Naive thymus-derived CD4-positive, alpha-beta T cell (primary cell): ENCODE measurements at regions of chr3 and their contacts with region 1.

Region 1: DNA sequence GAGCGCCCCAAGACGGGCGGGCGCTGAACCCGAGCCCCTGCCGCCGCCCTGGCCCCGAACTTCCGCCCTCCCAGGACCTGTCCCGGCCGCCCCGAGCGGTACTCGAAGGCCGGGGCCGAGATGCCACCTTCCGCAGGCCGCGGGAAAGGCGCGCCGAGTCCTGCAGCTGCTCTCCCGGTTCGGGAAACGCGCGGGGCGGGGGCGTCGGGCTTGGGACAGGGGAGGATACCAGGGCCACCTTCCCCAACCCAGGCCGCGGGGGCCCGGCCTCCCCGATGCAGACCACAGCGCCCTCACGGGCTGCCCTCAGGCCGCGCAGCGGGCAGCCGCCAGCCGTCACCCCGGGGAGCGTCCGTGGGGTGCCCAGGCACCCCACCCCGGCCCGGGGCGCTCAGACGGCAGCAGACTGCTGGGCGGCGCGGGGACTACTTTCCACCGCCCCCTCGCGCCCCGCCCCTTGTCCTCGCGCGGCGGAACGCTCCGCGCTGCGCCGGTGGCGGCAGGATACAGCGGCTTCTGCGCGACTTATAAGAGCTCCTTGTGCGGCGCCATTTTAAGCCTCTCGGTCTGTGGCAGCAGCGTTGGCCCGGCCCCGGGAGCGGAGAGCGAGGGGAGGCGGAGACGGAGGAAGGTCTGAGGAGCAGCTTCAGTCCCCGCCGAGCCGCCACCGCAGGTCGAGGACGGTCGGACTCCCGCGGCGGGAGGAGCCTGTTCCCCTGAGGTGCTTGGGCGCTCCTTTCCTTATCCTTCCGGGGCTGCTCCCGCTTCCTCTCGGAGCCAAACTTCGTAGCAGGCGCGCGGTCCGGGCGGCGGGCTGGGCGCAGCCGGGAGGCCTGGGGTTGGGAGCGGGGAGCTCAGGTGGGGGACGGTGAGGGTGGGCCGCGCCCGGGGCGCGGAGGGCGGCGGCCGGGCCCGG is at the start of gene CTNNB1:
- DNase-seq: peak; percentile 88 to 94 (median 92)
- ATAC-seq: peak; percentile 93
- H3K4me3 ChIP-seq: peak within 1 kb of the TSS; percentile 79
- H3K4me3 Mint-ChIP-seq: peak within 1 kb of the TSS; percentile 90 to 100 (median 95)
- H3K27ac ChIP-seq: peak within 1 kb of the TSS; percentile 97
- H3K27ac Mint-ChIP-seq: peak within 1 kb of the TSS; percentile 92 to 98 (median 96)
- H3K4me1 ChIP-seq: peaks cover 26 to 39% of the 10 kb centered on the region in 2 donors
- H3K4me1 Mint-ChIP-seq: peaks cover 31 to 43% (median 38%) of the 10 kb centered on the region in 7 donors
- H3K27me3 ChIP-seq: peaks cover 0 to 3% of the 10 kb centered on the region in 2 donors
- H3K27me3 Mint-ChIP-seq: peaks cover 0 to 29% (median 0%) of the 10 kb centered on the region in 5 donors
- total RNA-seq, gene CTNNB1: 118 to 227 (median 177) TPM

Region 2: GRCh38 chr3:40309418-40309924 is 889.7 kb before region 1 on chr3 and contains the start of gene EIF1B:
- CTCF ChIA-PET with region 1: no interaction called
- POLR2A ChIA-PET with region 1: interaction called, 4 read pairs
- intact Hi-C with region 1: loop called (anchors 1 kb)
- DNase-seq: peak; percentile 95 to 99 (median 98)
- ATAC-seq: peak; percentile 97
- H3K4me3 ChIP-seq: peak within 1 kb of the TSS; percentile 80
- H3K4me3 Mint-ChIP-seq: peak within 1 kb of the TSS; percentile 92 to 100 (median 99)
- H3K27ac ChIP-seq: peak within 1 kb of the TSS; percentile 99
- H3K27ac Mint-ChIP-seq: peak within 1 kb of the TSS; percentile 97 to 100 (median 99)
- H3K4me1 ChIP-seq: peaks cover 5 to 16% of the 10 kb centered on the region in 2 donors
- H3K4me1 Mint-ChIP-seq: peaks cover 5 to 44% (median 30%) of the 10 kb centered on the region in 7 donors
- H3K27me3 ChIP-seq: no peaks in the 10 kb centered on the region
- H3K27me3 Mint-ChIP-seq: no peaks in the 10 kb centered on the region
- total RNA-seq, gene EIF1B: 34.5 to 82.0 (median 53.3) TPM

Region 3: GRCh38 chr3:40580494-40581091 is 618.6 kb before region 1 on chr3:
- CTCF ChIA-PET with region 1: no interaction called
- POLR2A ChIA-PET with region 1: no interaction called
- intact Hi-C with region 1: loop called in 1 of 2 experiments (anchors 5 kb)
- DNase-seq: peak; percentile 18 to 61 (median 51)
- ATAC-seq: peak; percentile 72
- H3K4me3 ChIP-seq: no peak overlapping the region
- H3K4me3 Mint-ChIP-seq: no peak overlapping the region
- H3K27ac ChIP-seq: no peak overlapping the region
- H3K27ac Mint-ChIP-seq: peak overlapping the region in 1 of 9 donors; percentile 5
- H3K4me1 ChIP-seq: no peaks in the 10 kb centered on the region
- H3K4me1 Mint-ChIP-seq: no peaks in the 10 kb centered on the region
- H3K27me3 ChIP-seq: no peaks in the 10 kb centered on the region
- H3K27me3 Mint-ChIP-seq: peaks cover 0 to 9% (median 4%) of the 10 kb centered on the region in 5 donors

Region 4: DNA sequence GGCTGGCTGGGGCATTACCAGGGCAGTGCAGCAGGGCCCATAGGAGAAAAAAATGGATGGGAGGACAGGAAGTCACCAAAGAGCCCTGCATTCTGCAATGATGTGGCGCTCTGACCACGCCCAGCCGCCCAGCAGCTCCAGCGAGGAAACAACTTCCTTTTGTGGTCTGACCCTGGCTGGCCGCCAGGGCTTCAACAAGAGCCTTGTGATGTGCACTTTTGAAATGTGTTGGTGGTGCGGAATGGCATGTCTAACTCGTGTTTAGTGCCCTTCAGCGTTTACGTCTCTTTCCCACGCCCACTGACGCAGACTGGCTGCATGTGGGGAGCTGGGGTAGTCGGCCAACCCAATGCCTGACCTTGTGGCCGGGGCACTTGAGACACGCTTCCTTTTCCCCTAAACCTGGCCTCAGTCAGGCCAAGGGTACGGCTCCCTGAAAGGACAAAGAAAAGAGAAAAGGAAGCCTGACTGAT is 81.8 kb before region 1 on chr3:
- CTCF ChIA-PET with region 1: no interaction called
- POLR2A ChIA-PET with region 1: interaction called, 42 read pairs
- intact Hi-C with region 1: loop called (anchors 1 kb)
- DNase-seq: peak; percentile 67 to 93 (median 90)
- ATAC-seq: peak; percentile 92
- H3K4me3 ChIP-seq: peak overlapping the region; percentile 25
- H3K4me3 Mint-ChIP-seq: peak overlapping the region; percentile 43 to 90 (median 78)
- H3K27ac ChIP-seq: peak overlapping the region; percentile 68
- H3K27ac Mint-ChIP-seq: peak overlapping the region; percentile 67 to 98 (median 93)
- H3K4me1 ChIP-seq: peaks cover 12 to 27% of the 10 kb centered on the region in 2 donors
- H3K4me1 Mint-ChIP-seq: peaks cover 18 to 67% (median 46%) of the 10 kb centered on the region in 7 donors
- H3K27me3 ChIP-seq: no peaks in the 10 kb centered on the region
- H3K27me3 Mint-ChIP-seq: no peaks in the 10 kb centered on the region

Region 5: GRCh38 chr3:41234823-41235721 is 35.9 kb after region 1 on chr3:
- CTCF ChIA-PET with region 1: interaction called, 5 read pairs
- POLR2A ChIA-PET with region 1: interaction called, 6 read pairs
- intact Hi-C with region 1: loop called (anchors 2 to 5 kb)
- DNase-seq: no peak
- ATAC-seq: no peak
- H3K4me3 ChIP-seq: no peak overlapping the region
- H3K4me3 Mint-ChIP-seq: no peak overlapping the region
- H3K27ac ChIP-seq: no peak overlapping the region
- H3K27ac Mint-ChIP-seq: peak overlapping the region in 5 of 9 donors; percentile 7 to 68 (median 41)
- H3K4me1 ChIP-seq: no peaks in the 10 kb centered on the region
- H3K4me1 Mint-ChIP-seq: peaks cover 0 to 11% (median 7%) of the 10 kb centered on the region in 7 donors
- H3K27me3 ChIP-seq: no peaks in the 10 kb centered on the region
- H3K27me3 Mint-ChIP-seq: no peaks in the 10 kb centered on the region

Region 6: GRCh38 chr3:41350441-41350840 is 151.2 kb after region 1 on chr3:
- CTCF ChIA-PET with region 1: no interaction called
- POLR2A ChIA-PET with region 1: no interaction called
- intact Hi-C with region 1: no loop called
- DNase-seq: no peak
- ATAC-seq: no peak
- H3K4me3 ChIP-seq: no peak overlapping the region
- H3K4me3 Mint-ChIP-seq: no peak overlapping the region
- H3K27ac ChIP-seq: no peak overlapping the region
- H3K27ac Mint-ChIP-seq: no peak overlapping the region
- H3K4me1 ChIP-seq: no peaks in the 10 kb centered on the region
- H3K4me1 Mint-ChIP-seq: peaks cover 0 to 3% (median 0%) of the 10 kb centered on the region in 7 donors
- H3K27me3 ChIP-seq: no peaks in the 10 kb centered on the region
- H3K27me3 Mint-ChIP-seq: no peaks in the 10 kb centered on the region

Region 7: DNA sequence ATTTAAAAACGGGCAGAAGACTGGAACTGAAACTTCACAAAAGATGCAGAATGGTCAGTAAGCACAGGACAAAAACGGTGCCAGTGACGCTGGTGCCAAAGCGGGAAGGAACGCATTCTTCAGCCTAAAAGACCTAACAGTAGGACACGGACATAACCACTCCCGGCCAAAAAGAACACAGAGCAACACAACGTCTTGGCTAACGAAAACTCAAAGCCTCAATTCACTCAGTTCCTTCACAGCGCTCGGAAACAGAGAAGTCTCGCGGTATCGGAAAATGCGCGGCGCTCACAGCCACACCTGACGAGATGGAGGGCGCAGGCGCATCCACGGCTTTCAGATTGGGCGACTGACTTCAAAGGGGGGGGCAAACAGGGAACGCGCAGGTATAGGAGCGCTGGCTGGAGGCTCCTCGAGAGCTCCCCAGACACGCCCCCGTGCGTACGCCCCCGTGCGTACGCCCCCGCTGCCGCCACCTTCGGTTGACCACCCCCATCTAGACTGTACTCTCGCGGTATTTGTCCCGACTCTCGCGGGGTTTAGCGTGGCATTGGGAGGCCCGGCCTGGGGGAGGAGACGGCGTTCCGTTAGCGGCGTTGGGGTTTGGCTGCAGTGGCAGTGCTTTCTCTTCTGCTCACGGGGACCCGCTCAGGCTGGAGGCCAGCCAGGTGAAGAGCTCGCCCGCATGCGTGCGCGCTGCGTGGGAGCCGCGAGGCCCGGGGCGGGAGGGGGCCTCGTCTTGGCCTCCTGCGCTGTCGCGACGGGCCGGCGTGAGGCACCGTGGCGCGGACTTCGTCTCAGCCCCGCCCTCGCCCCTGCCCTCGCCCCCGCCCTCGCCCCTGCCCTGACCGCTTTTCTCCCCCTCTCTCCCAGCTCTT is 1401.1 kb after region 1 on chr3 and contains the start of gene NKTR:
- CTCF ChIA-PET with region 1: no interaction called
- POLR2A ChIA-PET with region 1: no interaction called
- intact Hi-C with region 1: loop called in 1 of 2 experiments (anchors 2 kb)
- DNase-seq: peak; percentile 98 to 100 (median 100)
- ATAC-seq: peak; percentile 97
- H3K4me3 ChIP-seq: peak within 1 kb of the TSS; percentile 75
- H3K4me3 Mint-ChIP-seq: peak within 1 kb of the TSS; percentile 91 to 98 (median 95)
- H3K27ac ChIP-seq: peak within 1 kb of the TSS; percentile 93
- H3K27ac Mint-ChIP-seq: peak within 1 kb of the TSS; percentile 95 to 99 (median 98)
- H3K4me1 ChIP-seq: peaks cover 11 to 25% of the 10 kb centered on the region in 2 donors
- H3K4me1 Mint-ChIP-seq: peaks cover 26 to 53% (median 43%) of the 10 kb centered on the region in 7 donors
- H3K27me3 ChIP-seq: no peaks in the 10 kb centered on the region
- H3K27me3 Mint-ChIP-seq: peaks cover 0 to 2% (median 0%) of the 10 kb centered on the region in 5 donors
- total RNA-seq, gene NKTR: 110 to 275 (median 238) TPM